B cell (primary cell): ENCODE measurements at regions of chr9 and their contacts with region 1.

Region 1: GRCh38 chr9:112308588-112308987 is 24.8 kb downstream of the PTBP3 start:
- DNase-seq: no peak
- ATAC-seq: no peak
- H3K4me3 ChIP-seq: no peak overlapping the region
- H3K4me3 Mint-ChIP-seq: no peak overlapping the region
- H3K27ac ChIP-seq: no peak overlapping the region
- H3K27ac Mint-ChIP-seq: no peak overlapping the region
- H3K4me1 ChIP-seq: peaks cover 0 to 3% of the 10 kb centered on the region in 2 donors
- H3K4me1 Mint-ChIP-seq: peaks cover 34% of the 10 kb centered on the region
- H3K27me3 ChIP-seq: no peaks in the 10 kb centered on the region
- H3K27me3 Mint-ChIP-seq: no peaks in the 10 kb centered on the region
- CTCF ChIP-seq: no peak

Region 2: GRCh38 chr9:112012026-112012902 is 296.3 kb before region 1 on chr9:
- CTCF ChIA-PET with region 1: no interaction called
- POLR2A ChIA-PET with region 1: no interaction called
- intact Hi-C with region 1: no loop called
- DNase-seq: peak; percentile 62
- ATAC-seq: peak; percentile 82
- H3K4me3 ChIP-seq: peak overlapping the region in 1 of 5 experiments; percentile 22
- H3K4me3 Mint-ChIP-seq: peak overlapping the region; percentile 57
- H3K27ac ChIP-seq: peak overlapping the region; percentile 56 to 74
- H3K27ac Mint-ChIP-seq: peak overlapping the region; percentile 88
- H3K4me1 ChIP-seq: peaks cover 44% of the 10 kb centered on the region in 2 donors
- H3K4me1 Mint-ChIP-seq: peaks cover 65% of the 10 kb centered on the region
- H3K27me3 ChIP-seq: no peaks in the 10 kb centered on the region
- H3K27me3 Mint-ChIP-seq: no peaks in the 10 kb centered on the region
- CTCF ChIP-seq: no peak

Region 3: GRCh38 chr9:112327718-112328464 is 19.3 kb after region 1 on chr9:
- CTCF ChIA-PET with region 1: no interaction called
- POLR2A ChIA-PET with region 1: no interaction called
- intact Hi-C with region 1: loop called (anchors 2 kb)
- DNase-seq: no peak
- ATAC-seq: no peak
- H3K4me3 ChIP-seq: no peak overlapping the region
- H3K4me3 Mint-ChIP-seq: no peak overlapping the region
- H3K27ac ChIP-seq: peak overlapping the region in 1 of 2 donors; percentile 32
- H3K27ac Mint-ChIP-seq: peak overlapping the region; percentile 51
- H3K4me1 ChIP-seq: peaks cover 34 to 53% of the 10 kb centered on the region in 2 donors
- H3K4me1 Mint-ChIP-seq: peaks cover 74% of the 10 kb centered on the region
- H3K27me3 ChIP-seq: no peaks in the 10 kb centered on the region
- H3K27me3 Mint-ChIP-seq: no peaks in the 10 kb centered on the region
- CTCF ChIP-seq: no peak

Region 4: GRCh38 chr9:112338561-112338960 is 30.0 kb after region 1 on chr9:
- CTCF ChIA-PET with region 1: no interaction called
- POLR2A ChIA-PET with region 1: no interaction called
- intact Hi-C with region 1: no loop called
- DNase-seq: no peak
- ATAC-seq: no peak
- H3K4me3 ChIP-seq: no peak overlapping the region
- H3K4me3 Mint-ChIP-seq: no peak overlapping the region
- H3K27ac ChIP-seq: no peak overlapping the region
- H3K27ac Mint-ChIP-seq: no peak overlapping the region
- H3K4me1 ChIP-seq: peaks cover 4% of the 10 kb centered on the region in 2 donors
- H3K4me1 Mint-ChIP-seq: peaks cover 5% of the 10 kb centered on the region
- H3K27me3 ChIP-seq: no peaks in the 10 kb centered on the region
- H3K27me3 Mint-ChIP-seq: no peaks in the 10 kb centered on the region
- CTCF ChIP-seq: no peak

Region 5: DNA sequence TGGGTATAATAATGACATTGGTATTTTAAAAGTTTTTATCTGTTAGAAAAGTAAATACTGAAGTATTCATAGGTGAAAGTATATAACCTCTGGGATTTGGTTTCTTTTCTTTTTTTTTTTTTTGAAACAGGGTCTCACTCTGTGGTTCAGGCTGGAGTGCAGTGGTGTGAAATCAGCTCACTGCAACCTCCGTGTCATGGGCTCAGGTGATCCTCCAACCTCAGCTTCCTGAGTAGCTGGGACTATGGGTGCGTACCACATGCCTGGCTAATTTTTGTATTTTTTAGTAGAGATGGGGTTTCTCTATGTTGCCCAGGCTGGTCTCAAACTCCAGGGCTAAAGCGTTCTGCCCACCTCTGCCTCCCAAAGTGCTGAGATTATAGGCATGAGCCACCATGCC is 78.5 kb after region 1 on chr9:
- CTCF ChIA-PET with region 1: no interaction called
- POLR2A ChIA-PET with region 1: no interaction called
- intact Hi-C with region 1: no loop called
- DNase-seq: no peak
- ATAC-seq: no peak
- H3K4me3 ChIP-seq: no peak overlapping the region
- H3K4me3 Mint-ChIP-seq: no peak overlapping the region
- H3K27ac ChIP-seq: no peak overlapping the region
- H3K27ac Mint-ChIP-seq: no peak overlapping the region
- H3K4me1 ChIP-seq: peaks cover 11 to 20% of the 10 kb centered on the region in 2 donors
- H3K4me1 Mint-ChIP-seq: peaks cover 33% of the 10 kb centered on the region
- H3K27me3 ChIP-seq: no peaks in the 10 kb centered on the region
- H3K27me3 Mint-ChIP-seq: no peaks in the 10 kb centered on the region
- CTCF ChIP-seq: no peak